ENCODE measurements at regions of chr2 and their contacts with region 1.

Region 1: GRCh38 chr2:181953881-181954537 is 31.6 kb upstream of the PPP1R1C start:
- DNase-seq: no peak
- ATAC-seq: peak; percentile 73
- H3K4me3 Mint-ChIP-seq: peak overlapping the region; percentile 44
- H3K27ac Mint-ChIP-seq: no peak overlapping the region
- H3K4me1 Mint-ChIP-seq: peaks cover 5% of the 10 kb centered on the region
- H3K27me3 Mint-ChIP-seq: peaks cover 6% of the 10 kb centered on the region
- CTCF ChIP-seq: no peak

Region 2: DNA sequence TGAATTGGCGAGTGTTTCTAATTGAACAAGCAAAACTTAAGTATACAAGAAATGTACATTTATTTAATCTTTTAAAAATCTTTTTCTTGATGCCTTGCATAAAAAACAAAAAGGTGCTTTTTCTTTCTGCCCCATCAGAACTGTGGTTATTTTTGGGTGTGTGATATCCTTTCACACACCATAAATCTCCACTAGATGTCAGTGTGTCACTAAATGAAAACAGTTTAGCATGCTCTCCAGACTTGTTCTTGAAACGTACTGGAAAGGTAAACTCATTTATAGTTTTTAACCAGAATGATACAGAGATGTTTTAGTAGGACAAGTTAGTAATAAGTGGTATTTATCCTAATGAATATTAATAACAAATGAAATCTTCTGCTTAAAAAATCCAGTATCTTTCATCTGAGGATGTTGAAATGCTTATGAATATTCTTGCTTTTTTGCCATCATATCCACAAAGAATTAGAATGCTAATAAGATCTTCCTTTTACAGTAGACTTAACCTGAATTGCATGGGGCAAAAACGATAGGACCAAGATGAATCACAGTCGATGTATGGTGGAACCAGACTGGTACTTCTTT is 876.8 kb before region 1 on chr2:
- CTCF ChIA-PET with region 1: no interaction called
- POLR2A ChIA-PET with region 1: no interaction called
- intact Hi-C with region 1: loop called (anchors 5 kb)
- DNase-seq: no peak
- ATAC-seq: peak; percentile 58
- H3K4me3 Mint-ChIP-seq: no peak overlapping the region
- H3K27ac Mint-ChIP-seq: no peak overlapping the region
- H3K4me1 Mint-ChIP-seq: no peaks in the 10 kb centered on the region
- H3K27me3 Mint-ChIP-seq: no peaks in the 10 kb centered on the region
- CTCF ChIP-seq: no peak

Region 3: DNA sequence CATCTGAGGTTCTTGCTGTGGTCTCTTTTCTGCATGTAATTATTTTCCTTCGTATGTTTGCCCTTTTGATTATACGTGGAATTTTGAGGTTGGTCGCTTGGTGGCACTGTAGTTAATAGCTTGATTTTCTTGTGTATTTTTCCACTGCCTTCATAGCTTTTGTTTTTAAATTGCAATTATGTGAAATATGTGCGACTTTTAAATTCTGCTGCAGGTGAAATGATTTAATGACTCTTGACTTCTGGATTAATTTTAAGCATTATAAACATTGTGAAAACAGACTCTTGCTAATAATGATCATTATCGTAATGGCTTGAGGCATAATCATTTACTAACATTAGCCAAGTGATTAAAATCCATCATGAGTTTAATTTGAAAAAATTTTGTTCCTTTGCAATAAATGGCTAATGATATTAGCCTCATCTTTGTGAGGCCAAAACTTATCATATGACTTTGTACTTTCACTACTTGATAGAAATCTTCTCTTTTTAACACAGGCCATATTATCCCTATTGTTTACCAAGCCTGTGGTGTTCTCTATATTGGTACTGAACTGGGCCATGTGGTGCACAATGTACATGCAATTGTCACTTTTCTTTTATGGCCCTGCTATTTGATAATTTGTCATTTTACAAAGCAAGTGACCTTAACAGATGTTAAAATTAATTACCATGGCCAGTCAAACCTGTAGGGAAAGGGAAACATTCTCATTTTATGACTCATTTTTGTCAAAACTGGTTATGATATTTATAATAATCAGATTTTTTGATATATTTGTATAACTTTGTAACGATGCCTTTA is 210.9 kb before region 1 on chr2:
- CTCF ChIA-PET with region 1: interaction called, 4 read pairs
- POLR2A ChIA-PET with region 1: no interaction called
- intact Hi-C with region 1: loop called (anchors 1 kb)
- DNase-seq: no peak
- ATAC-seq: no peak
- H3K4me3 Mint-ChIP-seq: no peak overlapping the region
- H3K27ac Mint-ChIP-seq: no peak overlapping the region
- H3K4me1 Mint-ChIP-seq: no peaks in the 10 kb centered on the region
- H3K27me3 Mint-ChIP-seq: peaks cover 12% of the 10 kb centered on the region
- CTCF ChIP-seq: no peak